Endothelial cell of umbilical vein (primary cell): ENCODE measurements at regions of chr6 and their contacts with region 1.

Region 1: GRCh38 chr6:127302728-127303660 is 36.3 kb downstream of the RNF146 start:
- DNase-seq: peak; percentile 81
- H3K4me3 ChIP-seq: no peak overlapping the region
- H3K27ac ChIP-seq: no peak overlapping the region
- H3K4me1 ChIP-seq: peaks cover 29% of the 10 kb centered on the region
- H3K27me3 ChIP-seq: no peaks in the 10 kb centered on the region
- CTCF ChIP-seq: peak; percentile 43 to 54
- POLR2A ChIP-seq: no peak

Region 2: DNA sequence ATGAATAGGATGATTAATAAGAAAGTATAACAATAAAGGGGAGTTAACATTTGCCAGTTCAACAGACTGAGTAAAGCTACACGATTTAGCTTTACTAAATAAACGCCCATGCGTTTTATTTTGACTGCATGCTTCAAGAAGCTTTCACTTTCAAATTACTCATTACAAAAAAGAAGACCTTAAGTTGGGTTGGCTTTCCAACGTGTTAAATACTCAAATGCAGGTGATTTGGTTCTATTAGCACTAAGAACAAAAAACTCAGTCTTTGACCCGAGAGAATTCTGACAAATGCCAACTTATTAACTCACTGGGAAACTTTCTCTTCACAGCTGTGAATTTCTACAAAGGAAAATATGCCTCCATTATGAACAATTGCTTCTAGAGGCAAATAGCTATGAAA is 11.5 kb before region 1 on chr6:
- CTCF ChIA-PET with region 1: interaction called, 18 read pairs
- POLR2A ChIA-PET with region 1: no interaction called
- dilution Hi-C with region 1: no loop called
- intact Hi-C with region 1: no loop called
- DNase-seq: no peak
- H3K4me3 ChIP-seq: no peak overlapping the region
- H3K27ac ChIP-seq: no peak overlapping the region
- H3K4me1 ChIP-seq: no peaks in the 10 kb centered on the region
- H3K27me3 ChIP-seq: no peaks in the 10 kb centered on the region
- CTCF ChIP-seq: no peak
- POLR2A ChIP-seq: no peak

Region 3: GRCh38 chr6:127342946-127343808 is 40.2 kb after region 1 on chr6 and contains the start of gene ECHDC1:
- CTCF ChIA-PET with region 1: interaction called, 6 read pairs
- POLR2A ChIA-PET with region 1: interaction called, 7 read pairs
- dilution Hi-C with region 1: no loop called
- intact Hi-C with region 1: loop called (anchors 1 kb)
- DNase-seq: peak; percentile 79
- H3K4me3 ChIP-seq: peak within 1 kb of the TSS; percentile 48 to 94 (median 86)
- H3K27ac ChIP-seq: peak within 1 kb of the TSS; percentile 88
- H3K4me1 ChIP-seq: peaks cover 20% of the 10 kb centered on the region
- H3K27me3 ChIP-seq: no peaks in the 10 kb centered on the region
- CTCF ChIP-seq: no peak
- POLR2A ChIP-seq: peak; percentile 74
- total RNA-seq, gene ECHDC1: 36.7 and 36.8 TPM in 2 replicates

Region 4: GRCh38 chr6:127464881-127465459 is 162.0 kb after region 1 on chr6:
- CTCF ChIA-PET with region 1: interaction called, 12 read pairs
- POLR2A ChIA-PET with region 1: no interaction called
- dilution Hi-C with region 1: no loop called
- intact Hi-C with region 1: loop called (anchors 1 kb)
- DNase-seq: peak; percentile 59
- H3K4me3 ChIP-seq: no peak overlapping the region
- H3K27ac ChIP-seq: no peak overlapping the region
- H3K4me1 ChIP-seq: no peaks in the 10 kb centered on the region
- H3K27me3 ChIP-seq: peaks cover 3 to 6% of the 10 kb centered on the region in 2 experiments
- CTCF ChIP-seq: peak; percentile 87 to 91
- POLR2A ChIP-seq: no peak

Region 5: GRCh38 chr6:127547215-127547614 is 244.2 kb after region 1 on chr6:
- CTCF ChIA-PET with region 1: interaction called, 13 read pairs
- POLR2A ChIA-PET with region 1: no interaction called
- dilution Hi-C with region 1: no loop called
- intact Hi-C with region 1: no loop called
- DNase-seq: no peak
- H3K4me3 ChIP-seq: no peak overlapping the region
- H3K27ac ChIP-seq: no peak overlapping the region
- H3K4me1 ChIP-seq: no peaks in the 10 kb centered on the region
- H3K27me3 ChIP-seq: peaks cover 2 to 4% of the 10 kb centered on the region in 2 experiments
- CTCF ChIP-seq: peak in 1 of 2 donors; percentile 34
- POLR2A ChIP-seq: no peak